Lower leg skin (tissue), 4 donors: ENCODE measurements at regions of chr22 and their contacts with region 1.

Region 1: GRCh38 chr22:27405672-27406388 is 395.7 kb downstream of the MN1 start:
- DNase-seq: no peak
- H3K4me3 ChIP-seq: no peak overlapping the region
- CTCF ChIP-seq: no peak
- POLR2A ChIP-seq: no peak

Region 2: DNA sequence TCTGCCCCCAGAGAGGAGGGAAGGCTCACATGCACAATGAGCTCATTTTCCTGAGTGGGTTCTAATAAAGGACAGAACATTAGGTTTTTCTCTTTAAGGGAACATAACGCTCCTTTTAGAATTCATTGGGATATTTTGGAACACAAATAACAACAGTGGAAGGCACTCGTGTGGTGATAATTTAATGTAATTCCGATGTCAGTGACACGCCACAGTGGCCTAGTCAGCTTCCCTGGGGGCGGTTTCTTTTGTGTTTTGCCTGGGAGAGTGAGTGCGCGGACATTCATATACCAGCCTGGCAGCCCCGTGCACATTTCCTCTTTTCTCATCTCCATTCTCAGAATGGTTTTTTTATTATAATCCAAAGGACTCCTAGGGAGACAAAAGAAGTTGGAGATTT is 1195.5 kb before region 1 on chr22:
- intact Hi-C with region 1: no loop called
- DNase-seq: no peak
- H3K4me3 ChIP-seq: no peak overlapping the region
- CTCF ChIP-seq: no peak
- POLR2A ChIP-seq: no peak

Region 3: GRCh38 chr22:26922806-26923205 is 483.0 kb before region 1 on chr22:
- intact Hi-C with region 1: no loop called
- DNase-seq: no peak
- H3K4me3 ChIP-seq: no peak overlapping the region
- CTCF ChIP-seq: no peak
- POLR2A ChIP-seq: no peak

Region 4: DNA sequence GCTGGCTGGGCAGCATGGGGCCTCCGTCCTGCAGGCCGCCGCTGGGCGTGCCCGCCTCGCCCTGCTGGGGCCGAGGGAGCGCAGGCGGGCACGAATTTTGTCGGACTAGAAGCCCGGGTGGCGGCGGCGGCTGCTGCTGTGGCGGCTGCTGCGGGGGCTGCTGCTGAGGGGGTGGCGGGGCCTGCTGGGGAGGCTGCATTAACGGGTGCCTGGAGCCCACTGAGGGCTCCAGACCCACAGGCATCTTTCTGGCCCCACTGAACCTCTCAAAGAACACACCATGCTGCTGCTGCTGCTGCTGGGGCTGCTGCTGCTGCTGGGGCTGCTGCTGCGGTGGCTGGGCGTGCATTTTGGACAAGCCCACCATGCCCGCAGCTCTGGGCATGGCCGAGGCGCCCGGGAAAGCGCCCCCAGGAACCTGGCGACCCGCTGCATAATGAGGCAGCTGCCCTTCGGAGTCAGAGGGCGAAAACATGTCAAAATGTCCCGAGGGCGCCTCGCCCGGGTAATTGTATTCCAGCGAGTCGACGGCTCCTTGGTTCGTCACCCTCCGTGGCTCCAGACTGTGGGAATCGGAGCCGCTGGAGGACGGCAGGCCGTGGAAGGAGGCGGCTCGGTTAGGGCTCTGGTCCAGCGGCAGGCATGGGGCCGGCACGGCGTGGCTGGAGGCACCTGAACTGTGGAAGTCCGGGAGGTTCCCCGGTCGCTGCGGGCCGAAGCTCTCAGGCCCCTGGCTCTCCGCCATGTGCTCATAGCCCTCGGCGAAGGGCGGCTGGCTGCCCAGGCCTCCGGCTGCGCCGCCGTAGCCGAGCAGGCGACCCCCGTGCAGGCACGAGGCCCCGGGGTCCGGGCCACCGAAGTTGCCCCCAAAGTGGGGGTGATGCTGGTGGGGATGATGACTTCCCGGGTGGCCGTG is 393.8 kb after region 1 on chr22:
- intact Hi-C with region 1: loop called (anchors 10 kb)
- DNase-seq: no peak
- H3K4me3 ChIP-seq: no peak overlapping the region
- CTCF ChIP-seq: no peak
- POLR2A ChIP-seq: no peak